Mammary epithelial cell (primary cell): ENCODE measurements at regions of chrX and their contacts with region 1.

Region 1: DNA sequence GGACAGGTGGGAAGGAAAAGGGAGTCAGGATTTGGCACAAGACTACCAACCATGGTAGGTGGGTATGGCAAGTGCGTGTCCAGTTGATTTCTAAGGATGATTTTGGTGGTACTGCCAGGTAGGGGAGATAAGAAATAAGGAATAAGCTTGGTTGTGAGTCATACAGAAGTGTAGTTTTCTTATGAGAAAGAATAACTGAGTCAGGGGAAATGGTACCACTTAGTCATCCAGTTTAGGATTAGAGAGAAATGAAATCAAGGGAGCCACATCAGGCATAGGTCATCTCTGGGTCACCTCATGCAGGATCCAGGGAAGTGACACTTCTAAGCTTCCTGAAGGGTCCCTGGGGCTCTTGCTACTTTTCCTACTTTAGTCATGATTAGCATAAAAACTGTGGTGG is 107.1 kb upstream of the C1GALT1C1 start:
- DNase-seq: peak; percentile 55
- H3K4me3 ChIP-seq: no peak overlapping the region
- H3K27ac ChIP-seq: no peak overlapping the region
- H3K4me1 ChIP-seq: peaks cover 15% of the 10 kb centered on the region
- H3K27me3 ChIP-seq: no peaks in the 10 kb centered on the region
- CTCF ChIP-seq: no peak

Region 2: GRCh38 chrX:120517936-120518335 is 219.1 kb before region 1 on chrX:
- CTCF ChIA-PET with region 1: no interaction called
- dilution Hi-C with region 1: no loop called
- in situ Hi-C with region 1: no loop called
- intact Hi-C with region 1: no loop called
- DNase-seq: peak; percentile 59
- H3K4me3 ChIP-seq: no peak overlapping the region
- H3K27ac ChIP-seq: no peak overlapping the region
- H3K4me1 ChIP-seq: no peaks in the 10 kb centered on the region
- H3K27me3 ChIP-seq: no peaks in the 10 kb centered on the region
- CTCF ChIP-seq: no peak

Region 3: GRCh38 chrX:120629667-120630537 is 107.1 kb before region 1 on chrX and contains the start of gene C1GALT1C1:
- CTCF ChIA-PET with region 1: no interaction called
- dilution Hi-C with region 1: no loop called
- in situ Hi-C with region 1: no loop called
- intact Hi-C with region 1: no loop called
- DNase-seq: peak; percentile 90
- H3K4me3 ChIP-seq: peak within 1 kb of the TSS; percentile 52 to 70 (median 69)
- H3K27ac ChIP-seq: peak within 1 kb of the TSS; percentile 59
- H3K4me1 ChIP-seq: no peaks in the 10 kb centered on the region
- H3K27me3 ChIP-seq: no peaks in the 10 kb centered on the region
- CTCF ChIP-seq: peak in 1 of 2 donors; percentile 1
- total RNA-seq, gene C1GALT1C1: 10.4 to 17.0 TPM

Region 4: GRCh38 chrX:120672390-120672789 is 64.6 kb before region 1 on chrX:
- CTCF ChIA-PET with region 1: no interaction called
- dilution Hi-C with region 1: loop called (anchors 5 kb)
- in situ Hi-C with region 1: no loop called
- intact Hi-C with region 1: no loop called
- DNase-seq: peak; percentile 72
- H3K4me3 ChIP-seq: no peak overlapping the region
- H3K27ac ChIP-seq: peak overlapping the region; percentile 60
- H3K4me1 ChIP-seq: peaks cover 8% of the 10 kb centered on the region
- H3K27me3 ChIP-seq: no peaks in the 10 kb centered on the region
- CTCF ChIP-seq: no peak

Region 5: GRCh38 chrX:120769576-120770341 is 32.8 kb after region 1 on chrX:
- CTCF ChIA-PET with region 1: no interaction called
- dilution Hi-C with region 1: no loop called
- in situ Hi-C with region 1: no loop called
- intact Hi-C with region 1: no loop called
- DNase-seq: peak; percentile 64
- H3K4me3 ChIP-seq: no peak overlapping the region
- H3K27ac ChIP-seq: no peak overlapping the region
- H3K4me1 ChIP-seq: peaks cover 8% of the 10 kb centered on the region
- H3K27me3 ChIP-seq: no peaks in the 10 kb centered on the region
- CTCF ChIP-seq: peak; percentile 17 to 46

Region 6: GRCh38 chrX:121093011-121093410 is 356.0 kb after region 1 on chrX:
- CTCF ChIA-PET with region 1: no interaction called
- dilution Hi-C with region 1: no loop called
- in situ Hi-C with region 1: no loop called
- intact Hi-C with region 1: no loop called
- DNase-seq: no peak
- H3K4me3 ChIP-seq: no peak overlapping the region
- H3K27ac ChIP-seq: no peak overlapping the region
- H3K4me1 ChIP-seq: no peaks in the 10 kb centered on the region
- H3K27me3 ChIP-seq: no peaks in the 10 kb centered on the region
- CTCF ChIP-seq: no peak